CD4-positive, alpha-beta T cell (primary cell): ENCODE measurements at regions of chr1 and their contacts with region 1.

Region 1: DNA sequence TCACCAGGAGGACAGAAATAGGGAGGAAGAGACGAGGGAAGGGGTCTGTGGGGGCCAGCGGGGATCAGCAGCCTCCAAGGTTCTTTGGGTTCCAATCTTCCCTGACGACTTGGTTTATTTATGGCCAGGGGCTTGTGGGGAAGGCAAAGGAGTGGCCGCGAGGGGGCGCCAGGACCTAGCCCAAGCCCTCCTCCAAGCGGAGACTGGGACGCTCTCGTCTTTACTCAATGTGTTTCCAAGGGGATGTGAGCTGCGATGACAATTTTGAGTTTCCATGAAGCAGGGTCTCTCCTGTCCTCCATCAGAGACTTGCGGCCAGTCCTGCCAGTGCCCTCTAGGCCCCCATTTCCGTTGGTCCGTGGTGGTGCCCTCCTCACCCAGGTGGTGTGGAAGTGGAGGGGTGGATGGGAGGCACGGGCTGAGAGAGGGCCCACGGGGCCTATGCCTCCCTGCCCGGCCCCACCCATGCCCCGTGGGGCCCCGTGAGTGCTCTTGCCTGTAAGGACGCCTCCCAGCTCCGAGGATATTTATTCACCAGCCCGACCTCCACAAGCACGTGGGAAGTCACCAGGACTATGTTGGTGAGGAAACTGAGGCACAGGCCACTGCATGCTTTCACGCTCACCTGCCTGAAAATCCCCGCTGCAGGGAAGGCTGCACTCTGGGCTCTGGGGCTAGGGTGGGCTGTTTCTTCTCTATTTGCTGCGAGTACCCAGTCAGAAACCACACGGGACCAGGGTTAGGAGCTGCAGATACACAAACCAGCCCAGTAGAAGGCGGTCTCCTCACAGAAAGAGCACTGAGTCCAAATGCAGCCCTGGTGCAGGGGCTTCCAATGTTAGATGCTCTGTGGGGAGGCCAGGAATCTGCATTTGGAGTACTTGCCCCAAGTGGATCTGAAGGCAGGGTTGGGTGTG is 26.5 kb downstream of the DMRTB1 start:
- DNase-seq: peak; percentile 24 to 75 (median 46)
- ATAC-seq: no peak
- H3K4me3 ChIP-seq: no peak overlapping the region
- H3K4me3 Mint-ChIP-seq: no peak overlapping the region
- H3K27ac ChIP-seq: no peak overlapping the region
- H3K27ac Mint-ChIP-seq: no peak overlapping the region
- H3K4me1 ChIP-seq: peaks cover 7% of the 10 kb centered on the region
- H3K4me1 Mint-ChIP-seq: no peaks in the 10 kb centered on the region
- H3K27me3 ChIP-seq: peaks cover 3 to 12% of the 10 kb centered on the region in 2 experiments
- H3K27me3 Mint-ChIP-seq: peaks cover 42% of the 10 kb centered on the region
- CTCF ChIP-seq: peak; percentile 76

Region 2: GRCh38 chr1:53644909-53645689 is 159.4 kb after region 1 on chr1:
- CTCF ChIA-PET with region 1: no interaction called
- POLR2A ChIA-PET with region 1: no interaction called
- intact Hi-C with region 1: no loop called
- DNase-seq: no peak
- ATAC-seq: no peak
- H3K4me3 ChIP-seq: no peak overlapping the region
- H3K4me3 Mint-ChIP-seq: no peak overlapping the region
- H3K27ac ChIP-seq: no peak overlapping the region
- H3K27ac Mint-ChIP-seq: no peak overlapping the region
- H3K4me1 ChIP-seq: no peaks in the 10 kb centered on the region
- H3K4me1 Mint-ChIP-seq: no peaks in the 10 kb centered on the region
- H3K27me3 ChIP-seq: no peaks in the 10 kb centered on the region
- H3K27me3 Mint-ChIP-seq: no peaks in the 10 kb centered on the region
- CTCF ChIP-seq: no peak

Region 3: DNA sequence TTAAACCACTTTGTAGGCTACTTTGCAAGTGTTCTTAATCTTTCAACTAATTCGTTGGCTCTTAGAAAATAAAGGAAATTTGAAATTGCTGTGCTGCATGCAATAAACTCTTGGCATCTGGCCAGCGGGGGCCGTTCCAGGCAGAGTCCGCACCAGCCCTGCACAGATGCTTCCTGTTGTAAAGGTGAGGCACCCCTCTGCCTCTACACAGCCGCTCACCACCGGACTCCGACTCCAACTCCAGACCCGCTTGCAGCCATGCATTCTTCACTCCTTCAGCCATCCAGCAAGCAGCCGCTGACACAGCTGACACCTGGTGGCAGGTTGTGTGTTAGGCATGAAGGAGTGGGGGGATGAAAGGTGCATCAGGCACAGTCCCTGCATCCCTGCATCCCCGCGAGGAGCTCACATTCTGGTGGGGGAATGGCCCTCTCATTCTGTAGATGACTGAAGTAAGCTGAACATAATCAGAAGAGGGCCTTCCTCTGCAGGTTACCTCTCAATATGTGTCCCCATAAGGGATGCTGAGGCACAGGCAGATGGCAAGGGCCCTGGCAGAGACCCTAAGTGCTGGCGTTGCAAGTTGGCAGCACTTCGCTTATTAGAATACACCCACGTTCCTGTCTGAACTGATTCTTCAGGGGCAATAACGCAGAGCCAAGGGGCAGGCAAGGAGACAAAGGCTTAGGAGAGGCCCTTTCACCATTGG is 196.4 kb after region 1 on chr1:
- CTCF ChIA-PET with region 1: no interaction called
- POLR2A ChIA-PET with region 1: no interaction called
- intact Hi-C with region 1: loop called (anchors 1 to 2 kb)
- DNase-seq: peak; percentile 10 to 57 (median 20)
- ATAC-seq: peak; percentile 57
- H3K4me3 ChIP-seq: no peak overlapping the region
- H3K4me3 Mint-ChIP-seq: peak overlapping the region; percentile 52
- H3K27ac ChIP-seq: no peak overlapping the region
- H3K27ac Mint-ChIP-seq: no peak overlapping the region
- H3K4me1 ChIP-seq: peaks cover 5% of the 10 kb centered on the region
- H3K4me1 Mint-ChIP-seq: peaks cover 9% of the 10 kb centered on the region
- H3K27me3 ChIP-seq: no peaks in the 10 kb centered on the region
- H3K27me3 Mint-ChIP-seq: peaks cover 18% of the 10 kb centered on the region
- CTCF ChIP-seq: peak; percentile 19

Region 4: DNA sequence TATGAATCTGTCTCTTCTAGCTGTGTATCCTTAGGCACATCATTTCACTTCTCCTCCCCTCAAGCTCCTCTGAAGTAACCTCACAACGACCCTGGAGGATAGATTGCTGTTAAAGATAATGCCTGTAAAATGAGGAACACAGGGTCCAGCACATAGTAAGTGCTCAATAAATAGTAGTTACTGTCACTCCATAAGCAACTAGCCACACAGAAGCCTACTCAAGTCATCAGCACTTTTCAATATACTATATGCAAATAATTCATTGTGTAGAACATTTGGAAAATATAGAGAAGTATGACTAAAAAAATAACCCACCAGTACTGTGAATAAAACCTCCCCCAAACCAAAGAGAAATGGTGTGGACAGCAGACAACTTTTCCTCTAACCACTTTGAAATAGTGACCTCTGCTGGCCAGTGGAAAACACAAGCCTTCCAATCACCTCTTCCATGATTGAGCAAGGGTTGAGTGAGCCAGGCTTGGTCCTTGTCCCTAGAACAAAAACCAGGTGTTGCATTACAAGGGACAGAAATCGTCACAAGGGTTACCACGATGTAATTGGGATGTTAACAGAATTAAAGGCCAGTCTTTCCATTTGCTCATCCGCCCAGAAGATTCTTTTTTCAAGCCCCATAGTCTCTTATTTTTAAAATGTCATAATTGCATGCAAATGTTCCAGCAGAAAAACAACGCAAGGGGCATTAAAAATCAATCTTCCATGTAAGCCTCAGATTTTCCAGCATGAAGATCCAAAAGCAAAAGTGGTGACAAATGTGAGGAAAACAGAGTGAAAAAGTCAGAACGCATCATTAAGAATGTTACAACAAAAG is 269.0 kb after region 1 on chr1:
- CTCF ChIA-PET with region 1: no interaction called
- POLR2A ChIA-PET with region 1: no interaction called
- intact Hi-C with region 1: loop called in 1 of 2 experiments (anchors 5 kb)
- DNase-seq: peak in 4 of 14 experiments; percentile 16 to 43 (median 32)
- ATAC-seq: no peak
- H3K4me3 ChIP-seq: no peak overlapping the region
- H3K4me3 Mint-ChIP-seq: no peak overlapping the region
- H3K27ac ChIP-seq: no peak overlapping the region
- H3K27ac Mint-ChIP-seq: no peak overlapping the region
- H3K4me1 ChIP-seq: no peaks in the 10 kb centered on the region
- H3K4me1 Mint-ChIP-seq: no peaks in the 10 kb centered on the region
- H3K27me3 ChIP-seq: no peaks in the 10 kb centered on the region
- H3K27me3 Mint-ChIP-seq: no peaks in the 10 kb centered on the region
- CTCF ChIP-seq: peak; percentile 59